Activated CD8-positive, alpha-beta T cell treated with anti-CD3 and anti-CD28 coated beads, Interleukin-2, amount 10 ng/mL, durations not matched to agents 7 days and 5 days (primary cell): ENCODE measurements at regions of chr2 and their contacts with region 1.

Region 1: DNA sequence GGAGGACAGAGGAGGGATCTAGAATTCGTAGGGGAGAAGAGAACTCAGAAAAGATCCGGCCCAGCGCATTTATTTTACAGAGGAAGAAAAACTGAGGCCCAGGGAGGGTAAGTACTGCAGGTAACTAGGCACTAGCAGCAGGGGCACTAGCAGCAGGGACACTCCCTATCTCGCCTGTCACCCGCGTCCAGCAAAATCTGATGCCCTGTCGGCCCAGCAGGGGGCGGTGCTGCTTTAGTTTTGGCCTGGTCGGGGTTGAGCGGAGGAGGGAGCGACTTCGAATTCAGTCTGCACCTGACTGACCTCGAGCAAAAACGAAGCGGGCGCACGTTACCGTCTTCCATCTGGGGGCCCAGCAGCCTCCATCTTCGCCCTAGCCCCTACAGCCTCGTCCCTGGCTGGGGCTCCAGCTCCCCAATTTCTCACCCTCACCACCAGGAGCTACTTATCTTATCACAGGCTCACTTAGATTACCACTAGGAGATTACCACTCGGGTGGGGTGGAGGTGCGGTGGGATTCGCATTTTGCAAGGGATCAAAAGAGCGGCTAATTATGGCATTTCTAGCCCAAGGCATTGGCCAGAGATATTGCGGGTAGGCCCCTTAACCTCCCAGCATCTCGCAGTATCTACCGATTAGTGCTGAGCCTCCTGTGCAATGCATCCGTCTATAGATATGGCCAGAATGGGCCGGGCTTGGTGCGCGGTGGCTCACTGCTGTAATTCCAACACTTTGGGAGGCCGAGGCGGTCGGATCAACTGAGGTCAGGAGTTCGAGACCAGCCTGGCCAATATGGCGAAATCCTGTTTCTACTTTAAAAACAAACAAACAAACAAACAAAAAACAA is 17.8 kb upstream of the CD8A start:
- DNase-seq: peak; percentile 98
- ATAC-seq: peak; percentile 73
- H3K4me3 Mint-ChIP-seq: peak overlapping the region; percentile 93
- H3K27ac Mint-ChIP-seq: peak overlapping the region; percentile 94
- H3K4me1 Mint-ChIP-seq: peaks cover 50% of the 10 kb centered on the region
- H3K27me3 Mint-ChIP-seq: no peaks in the 10 kb centered on the region

Region 2: GRCh38 chr2:86783615-86784339 is 24.8 kb before region 1 on chr2:
- CTCF ChIA-PET with region 1: interaction called, 243 read pairs
- POLR2A ChIA-PET with region 1: interaction called, 329 read pairs
- DNase-seq: no peak
- ATAC-seq: no peak
- H3K4me3 Mint-ChIP-seq: no peak overlapping the region
- H3K27ac Mint-ChIP-seq: peak overlapping the region; percentile 99
- H3K4me1 Mint-ChIP-seq: peaks cover 63% of the 10 kb centered on the region
- H3K27me3 Mint-ChIP-seq: no peaks in the 10 kb centered on the region

Region 3: DNA sequence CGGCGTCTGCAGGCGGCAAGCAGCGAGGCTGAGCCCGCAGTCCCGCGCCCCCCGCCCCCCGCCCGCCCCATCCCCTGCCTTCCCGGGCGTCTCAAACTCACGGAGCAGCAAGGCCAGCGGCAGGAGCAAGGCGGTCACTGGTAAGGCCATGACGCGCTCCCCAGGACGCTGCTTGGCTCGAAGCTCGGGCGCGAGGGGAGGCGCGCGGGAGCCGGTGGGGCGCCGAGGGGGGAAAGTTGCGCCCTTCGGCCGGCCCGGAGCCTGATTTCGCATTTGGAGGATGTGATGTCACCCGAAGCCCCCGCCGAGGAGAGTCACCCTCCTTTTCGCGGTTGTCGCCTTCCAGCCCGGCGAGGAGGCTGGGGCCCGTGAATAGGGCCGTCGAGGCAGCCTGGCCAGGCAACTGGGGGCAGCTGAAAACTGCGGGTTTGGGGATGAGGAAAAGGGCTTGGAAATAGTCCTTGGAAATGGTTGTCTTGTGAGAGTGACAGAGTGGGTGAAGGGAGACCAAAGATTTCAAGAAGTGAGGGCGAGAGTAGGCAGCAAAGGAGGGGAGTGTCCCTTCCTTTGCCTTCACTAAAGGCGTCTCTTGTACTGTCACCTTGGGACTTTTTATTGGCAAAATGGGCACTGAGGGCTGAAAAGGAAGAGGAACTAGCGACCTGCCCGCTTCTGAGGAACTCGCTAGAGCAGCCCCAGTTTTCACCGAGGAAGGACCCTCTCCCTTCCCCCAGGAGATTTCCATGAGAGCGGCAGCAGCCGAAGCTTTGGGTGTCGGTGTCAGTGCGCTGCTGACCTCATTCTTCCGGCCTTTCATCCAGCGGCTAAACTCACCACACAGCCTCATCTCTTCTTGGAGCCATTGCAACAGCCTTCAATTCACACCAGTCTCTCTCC is 17.6 kb before region 1 on chr2 and contains the start of gene CD8A:
- CTCF ChIA-PET with region 1: interaction called, 243 read pairs
- POLR2A ChIA-PET with region 1: interaction called, 329 read pairs
- DNase-seq: peak; percentile 91
- ATAC-seq: peak; percentile 41
- H3K4me3 Mint-ChIP-seq: peak within 1 kb of the TSS; percentile 95
- H3K27ac Mint-ChIP-seq: peak within 1 kb of the TSS; percentile 99
- H3K4me1 Mint-ChIP-seq: peaks cover 63% of the 10 kb centered on the region
- H3K27me3 Mint-ChIP-seq: no peaks in the 10 kb centered on the region
- total RNA-seq, gene CD8A: 667 to 675 TPM